Activated naive CD4-positive, alpha-beta T cell treated with anti-CD3 and anti-CD28 coated beads for 36 hours (primary cell): ENCODE measurements at regions of chr2 and their contacts with region 1.

Region 1: DNA sequence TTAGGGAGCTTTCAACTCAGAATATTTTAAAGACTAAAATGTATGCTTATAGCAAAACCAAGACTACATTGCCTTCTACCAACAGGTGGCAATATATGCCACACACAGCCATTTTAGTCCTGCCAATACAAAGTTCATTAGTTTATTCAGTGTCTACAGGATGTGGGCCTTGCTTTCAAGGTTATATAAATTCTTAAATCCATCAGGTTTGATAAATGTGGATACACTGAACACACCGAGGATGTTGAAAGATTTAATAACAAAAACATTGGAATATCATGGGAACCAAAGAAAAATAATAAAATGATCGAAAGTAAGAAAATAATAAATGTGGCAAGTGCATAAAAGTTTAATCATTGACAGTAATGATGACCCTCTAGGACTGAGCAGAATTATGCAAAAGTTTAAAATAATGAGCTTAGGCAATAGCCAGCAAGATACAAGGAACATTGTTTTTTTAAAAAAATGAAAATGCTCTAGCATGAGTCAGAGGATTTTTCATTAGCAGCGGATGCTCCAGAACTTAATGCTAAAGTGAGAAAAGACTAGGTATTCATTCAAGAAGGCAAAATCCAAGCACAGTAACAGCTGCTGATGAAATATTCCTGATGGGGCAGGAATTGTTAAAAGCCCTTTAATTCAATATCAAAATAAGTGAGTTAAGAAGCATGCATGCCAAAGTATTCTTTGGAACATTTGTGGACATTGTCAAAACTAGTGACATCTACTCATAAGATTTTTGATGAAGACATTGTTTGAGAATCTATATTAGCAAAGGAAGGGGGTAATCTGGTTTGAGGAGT is 14.2 kb downstream of the SCN9A start:
- DNase-seq: no peak
- H3K4me3 Mint-ChIP-seq: no peak overlapping the region
- H3K27ac Mint-ChIP-seq: no peak overlapping the region
- H3K4me1 Mint-ChIP-seq: no peaks in the 10 kb centered on the region
- H3K27me3 Mint-ChIP-seq: no peaks in the 10 kb centered on the region

Region 2: GRCh38 chr2:166384774-166385173 is 23.2 kb after region 1 on chr2:
- CTCF ChIA-PET with region 1: interaction called, 4 read pairs
- intact Hi-C with region 1: loop called (anchors 1 kb)
- DNase-seq: no peak
- H3K4me3 Mint-ChIP-seq: no peak overlapping the region
- H3K27ac Mint-ChIP-seq: no peak overlapping the region
- H3K4me1 Mint-ChIP-seq: no peaks in the 10 kb centered on the region
- H3K27me3 Mint-ChIP-seq: no peaks in the 10 kb centered on the region

Region 3: GRCh38 chr2:166516712-166517303 is 155.3 kb after region 1 on chr2:
- CTCF ChIA-PET with region 1: interaction called, 3 read pairs
- intact Hi-C with region 1: loop called (anchors 1 kb)
- DNase-seq: peak; percentile 26
- H3K4me3 Mint-ChIP-seq: no peak overlapping the region
- H3K27ac Mint-ChIP-seq: no peak overlapping the region
- H3K4me1 Mint-ChIP-seq: no peaks in the 10 kb centered on the region
- H3K27me3 Mint-ChIP-seq: peaks cover 1% of the 10 kb centered on the region